SK-N-SH (cell line): ENCODE measurements at regions of chr17 and their contacts with region 1.

Region 1: DNA sequence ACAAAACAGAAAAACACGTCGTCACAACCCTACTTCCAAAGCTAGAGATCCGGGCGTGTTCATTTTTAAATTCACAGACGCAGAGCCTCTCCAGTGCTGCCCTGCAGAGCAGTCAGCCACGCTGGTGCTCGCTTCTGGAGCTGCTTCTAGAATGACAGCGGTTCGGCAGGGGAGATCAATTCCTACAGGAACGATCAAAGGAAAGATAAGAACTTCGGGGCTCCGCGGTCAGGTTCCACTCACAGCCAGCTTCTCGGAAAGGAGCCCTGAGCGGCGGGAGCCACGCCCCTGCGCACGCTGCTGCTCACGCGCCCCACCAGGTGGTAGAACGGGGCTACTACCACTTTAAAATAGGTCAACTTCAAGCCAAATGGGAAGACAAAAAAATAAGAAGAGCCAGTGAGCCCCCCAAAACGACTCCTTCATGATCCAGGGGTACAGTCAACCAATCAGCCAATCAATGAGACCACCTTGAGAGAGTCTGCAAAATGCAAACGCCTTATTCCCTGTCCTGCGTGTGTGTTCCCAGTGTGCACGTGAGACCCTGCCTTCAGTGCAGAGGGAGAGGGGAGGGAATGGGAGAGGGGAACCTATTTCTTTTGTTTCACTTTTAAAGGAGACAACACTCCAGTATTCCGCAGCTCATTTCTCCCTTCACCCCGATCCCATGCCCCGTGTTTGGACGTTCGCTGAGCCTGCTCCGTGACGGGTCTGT is 209.7 kb downstream of the RBFOX3 start:
- DNase-seq: peak; percentile 94
- H3K4me3 ChIP-seq: peak overlapping the region; percentile 34 to 55
- H3K27ac ChIP-seq: no peak overlapping the region
- H3K4me1 ChIP-seq: peaks cover 0 to 8% of the 10 kb centered on the region in 2 experiments; a peak in 1 of 4 replicates
- H3K27me3 ChIP-seq: peaks cover 55% of the 10 kb centered on the region
- CTCF ChIP-seq: peak; percentile 97
- EP300 ChIP-seq: no peak
- RAD21 ChIP-seq: peak; percentile 67

Region 2: DNA sequence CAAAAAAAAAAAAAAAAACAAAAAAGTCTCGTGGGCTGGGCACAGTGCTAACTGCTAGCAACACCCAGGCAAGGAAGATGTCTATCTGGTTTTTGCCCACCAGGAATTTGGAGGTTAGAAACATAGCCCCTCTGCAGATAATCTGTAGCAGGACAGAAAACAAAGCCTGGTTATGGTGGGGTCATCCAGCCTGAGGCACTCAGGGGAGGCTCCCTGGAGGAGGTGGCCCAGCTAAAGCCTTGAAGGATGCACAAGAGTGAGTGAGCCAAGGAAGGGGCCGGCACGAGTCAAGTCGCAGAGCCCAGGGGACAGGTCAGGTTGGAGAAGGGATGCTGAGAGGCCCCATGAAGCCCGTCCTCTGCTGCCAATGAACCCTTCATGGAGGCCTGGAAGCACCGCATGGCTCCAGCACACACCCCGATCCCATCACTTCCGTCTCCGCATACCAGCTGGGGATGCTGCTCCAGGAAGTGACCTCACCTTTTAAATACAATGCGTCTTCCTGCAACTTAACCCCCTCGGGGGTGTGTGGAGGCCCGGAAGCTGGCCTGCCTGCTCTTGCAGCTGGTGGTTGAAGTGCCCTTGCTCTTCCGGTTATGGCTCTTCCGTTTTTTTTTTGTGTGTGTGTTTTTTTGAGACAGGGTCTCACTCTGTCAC is 240.0 kb before region 1 on chr17:
- CTCF ChIA-PET with region 1: interaction called, 571 read pairs
- POLR2A ChIA-PET with region 1: no interaction called
- DNase-seq: no peak
- H3K4me3 ChIP-seq: no peak overlapping the region
- H3K27ac ChIP-seq: no peak overlapping the region
- H3K4me1 ChIP-seq: peaks cover 0 to 34% of the 10 kb centered on the region in 2 experiments; a peak in 2 of 4 replicates
- H3K27me3 ChIP-seq: peaks cover 39% of the 10 kb centered on the region
- CTCF ChIP-seq: no peak
- EP300 ChIP-seq: no peak
- RAD21 ChIP-seq: no peak

Region 3: GRCh38 chr17:79413611-79414010 is 12.5 kb after region 1 on chr17:
- CTCF ChIA-PET with region 1: interaction called, 96 read pairs
- POLR2A ChIA-PET with region 1: no interaction called
- DNase-seq: peak; percentile 72
- H3K4me3 ChIP-seq: no peak overlapping the region
- H3K27ac ChIP-seq: no peak overlapping the region
- H3K4me1 ChIP-seq: peaks cover 0 to 16% of the 10 kb centered on the region in 2 experiments; a peak in 1 of 4 replicates
- H3K27me3 ChIP-seq: peaks cover 53% of the 10 kb centered on the region
- CTCF ChIP-seq: no peak
- EP300 ChIP-seq: no peak
- RAD21 ChIP-seq: no peak

Region 4: DNA sequence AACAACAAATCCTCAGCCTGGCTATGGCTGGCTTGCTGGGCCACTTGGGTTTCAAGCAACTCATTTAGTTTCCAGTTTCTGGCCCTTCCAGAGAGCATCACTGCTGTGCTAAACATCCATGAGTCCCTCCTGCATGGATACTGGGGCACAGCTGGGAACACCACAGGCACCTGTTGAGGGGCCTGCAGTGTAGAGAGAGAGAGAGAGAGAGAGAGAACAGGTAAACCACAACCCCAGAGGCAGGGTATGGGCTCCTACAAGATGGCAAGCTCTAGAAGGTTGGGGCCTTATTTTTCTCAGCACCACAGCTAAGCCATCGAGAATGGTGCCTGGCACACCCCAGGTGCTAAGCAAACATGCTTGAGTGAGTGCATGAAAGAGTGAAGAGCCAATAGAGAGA is 89.4 kb after region 1 on chr17:
- CTCF ChIA-PET with region 1: interaction called, 12 read pairs
- POLR2A ChIA-PET with region 1: no interaction called
- DNase-seq: no peak
- H3K4me3 ChIP-seq: no peak overlapping the region
- H3K27ac ChIP-seq: no peak overlapping the region
- H3K4me1 ChIP-seq: peaks cover 0 to under 1% of the 10 kb centered on the region in 2 experiments; a peak in 1 of 4 replicates
- H3K27me3 ChIP-seq: no peaks in the 10 kb centered on the region
- CTCF ChIP-seq: no peak
- EP300 ChIP-seq: no peak
- RAD21 ChIP-seq: no peak